ENCODE measurements at regions of chr11 and their contacts with region 1.

Region 1: DNA sequence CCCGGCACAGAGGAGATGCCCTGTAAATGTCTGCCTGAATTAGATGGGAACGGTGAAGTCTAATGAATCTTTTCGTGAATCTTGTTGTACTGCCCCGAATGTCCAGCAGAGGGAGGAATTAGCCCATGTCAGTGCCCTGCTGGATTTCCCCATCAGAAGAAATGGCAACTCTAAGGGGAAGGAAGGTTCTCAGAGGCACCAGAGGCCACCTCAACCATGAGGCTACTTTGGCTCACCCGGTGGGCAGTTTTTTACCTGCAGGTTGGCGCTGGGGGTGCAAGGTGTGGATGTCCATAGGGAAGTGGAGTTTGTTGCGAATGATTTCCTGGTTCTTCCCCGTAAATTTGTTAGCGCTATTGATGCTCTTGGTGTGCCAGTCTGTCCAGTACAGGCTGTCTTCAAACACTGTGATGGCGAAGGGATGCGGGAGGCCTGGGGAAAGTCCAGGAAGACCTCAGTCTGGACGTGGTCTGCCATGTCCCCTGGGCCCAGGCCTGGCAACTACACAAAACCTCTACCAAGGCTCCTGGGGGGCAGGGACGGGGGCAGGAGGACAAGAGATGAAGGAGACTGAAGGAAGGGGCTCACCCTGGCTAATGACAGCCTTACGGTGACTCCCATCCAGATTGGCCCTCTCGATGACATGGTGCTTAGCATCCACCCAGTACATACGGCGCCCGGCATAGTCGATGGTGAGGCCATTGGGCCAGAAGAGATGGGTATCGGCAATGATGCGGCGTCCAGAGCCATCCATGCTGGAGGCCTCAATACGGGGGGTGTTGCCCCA is 28.5 kb downstream of the LRP4 start:
- DNase-seq: peak; percentile 60 to 66
- H3K4me3 ChIP-seq: no peak overlapping the region
- H3K27ac ChIP-seq: no peak overlapping the region
- H3K4me1 ChIP-seq: no peaks in the 10 kb centered on the region
- H3K27me3 ChIP-seq: no peaks in the 10 kb centered on the region
- CTCF ChIP-seq: peak; percentile 92 to 95 (median 92)
- POLR2A ChIP-seq: no peak

Region 2: GRCh38 chr11:46920755-46921154 is 30.9 kb after region 1 on chr11:
- intact Hi-C with region 1: no loop called
- DNase-seq: no peak
- H3K4me3 ChIP-seq: no peak overlapping the region
- H3K27ac ChIP-seq: peak overlapping the region; percentile 46 to 48
- H3K4me1 ChIP-seq: no peaks in the 10 kb centered on the region
- H3K27me3 ChIP-seq: no peaks in the 10 kb centered on the region
- CTCF ChIP-seq: no peak
- POLR2A ChIP-seq: no peak

Region 3: GRCh38 chr11:47152953-47153950 is 263.4 kb after region 1 on chr11:
- intact Hi-C with region 1: loop called (anchors 5 kb)
- DNase-seq: peak; percentile 67 to 79
- H3K4me3 ChIP-seq: no peak overlapping the region
- H3K27ac ChIP-seq: no peak overlapping the region
- H3K4me1 ChIP-seq: peaks cover 0 to 7% of the 10 kb centered on the region in 2 donors
- H3K27me3 ChIP-seq: no peaks in the 10 kb centered on the region
- CTCF ChIP-seq: peak; percentile 86 to 96 (median 94)
- POLR2A ChIP-seq: no peak

Measured in breast epithelium (tissue), 4 donors.